ENCODE measurements at regions of chr2 and their contacts with region 1.

Region 1: DNA sequence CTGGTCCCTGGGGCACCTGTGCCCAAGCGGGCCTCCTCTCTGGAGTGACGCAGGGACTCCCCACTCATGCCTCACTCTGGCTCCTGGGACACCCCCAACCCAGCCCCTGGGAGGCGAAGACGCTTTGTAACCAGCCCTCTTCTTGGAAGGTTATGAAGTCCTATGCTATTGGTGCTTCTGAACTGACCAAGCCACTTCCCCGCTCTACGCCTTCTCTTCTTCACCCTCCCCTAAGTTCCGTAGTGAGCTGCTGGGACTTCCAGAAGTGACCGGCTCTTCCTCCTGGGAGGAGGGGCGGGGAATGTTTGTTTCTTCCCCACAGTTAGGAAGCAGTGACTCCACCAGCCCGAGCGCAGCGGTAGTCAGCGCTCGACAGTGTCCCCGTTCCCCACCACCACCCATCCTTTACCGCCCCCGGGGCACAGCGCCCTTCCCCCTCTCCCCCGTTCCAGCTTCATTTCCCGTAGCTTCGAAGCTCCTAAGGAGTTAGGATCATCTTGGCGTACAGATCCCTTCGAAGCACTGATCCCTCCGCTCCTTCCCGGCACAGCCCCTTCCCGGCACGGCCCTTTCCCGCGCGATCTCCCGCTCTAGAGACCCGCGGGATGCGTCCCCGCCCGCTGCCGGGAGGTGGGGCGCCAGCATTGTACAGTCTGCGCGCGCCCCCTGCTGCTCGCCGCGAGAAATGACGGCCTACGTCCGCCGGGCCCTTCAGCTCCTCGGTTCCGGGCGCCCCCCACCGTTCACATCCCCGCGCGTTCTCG is 25.3 kb upstream of the NOTO start:
- DNase-seq: peak; percentile 90 to 96
- H3K4me3 ChIP-seq: peak overlapping the region; percentile 76
- H3K4me3 Mint-ChIP-seq: peak overlapping the region; percentile 94
- H3K27ac Mint-ChIP-seq: peak overlapping the region; percentile 87
- H3K4me1 ChIP-seq: peaks cover 28% of the 10 kb centered on the region
- H3K4me1 Mint-ChIP-seq: peaks cover 10% of the 10 kb centered on the region
- H3K27me3 ChIP-seq: no peaks in the 10 kb centered on the region
- H3K27me3 Mint-ChIP-seq: peaks cover 6% of the 10 kb centered on the region
- CTCF ChIP-seq: peak; percentile 99

Region 2: GRCh38 chr2:72993147-72993932 is 183.7 kb before region 1 on chr2:
- CTCF ChIA-PET with region 1: interaction called, 6 read pairs
- POLR2A ChIA-PET with region 1: no interaction called
- intact Hi-C with region 1: loop called (anchors 1 kb)
- DNase-seq: peak in 1 of 2 experiments; percentile 70
- H3K4me3 ChIP-seq: no peak overlapping the region
- H3K4me3 Mint-ChIP-seq: no peak overlapping the region
- H3K27ac Mint-ChIP-seq: no peak overlapping the region
- H3K4me1 ChIP-seq: no peaks in the 10 kb centered on the region
- H3K4me1 Mint-ChIP-seq: no peaks in the 10 kb centered on the region
- H3K27me3 ChIP-seq: no peaks in the 10 kb centered on the region
- H3K27me3 Mint-ChIP-seq: no peaks in the 10 kb centered on the region
- CTCF ChIP-seq: peak; percentile 78 to 98

Region 3: GRCh38 chr2:73085691-73086360 is 91.2 kb before region 1 on chr2:
- CTCF ChIA-PET with region 1: interaction called, 25 read pairs
- POLR2A ChIA-PET with region 1: no interaction called
- intact Hi-C with region 1: no loop called
- DNase-seq: peak; percentile 87 to 89
- H3K4me3 ChIP-seq: no peak overlapping the region
- H3K4me3 Mint-ChIP-seq: no peak overlapping the region
- H3K27ac Mint-ChIP-seq: no peak overlapping the region
- H3K4me1 ChIP-seq: peaks cover 27% of the 10 kb centered on the region
- H3K4me1 Mint-ChIP-seq: peaks cover 24% of the 10 kb centered on the region
- H3K27me3 ChIP-seq: no peaks in the 10 kb centered on the region
- H3K27me3 Mint-ChIP-seq: no peaks in the 10 kb centered on the region
- CTCF ChIP-seq: peak; percentile 93 to 95

Region 4: GRCh38 chr2:73163483-73164367 is 13.3 kb before region 1 on chr2:
- CTCF ChIA-PET with region 1: interaction called, 12 read pairs
- POLR2A ChIA-PET with region 1: no interaction called
- intact Hi-C with region 1: no loop called
- DNase-seq: peak; percentile 80 to 86
- H3K4me3 ChIP-seq: no peak overlapping the region
- H3K4me3 Mint-ChIP-seq: no peak overlapping the region
- H3K27ac Mint-ChIP-seq: no peak overlapping the region
- H3K4me1 ChIP-seq: no peaks in the 10 kb centered on the region
- H3K4me1 Mint-ChIP-seq: no peaks in the 10 kb centered on the region
- H3K27me3 ChIP-seq: no peaks in the 10 kb centered on the region
- H3K27me3 Mint-ChIP-seq: peaks cover 8% of the 10 kb centered on the region
- CTCF ChIP-seq: peak; percentile 86 to 92

Region 5: DNA sequence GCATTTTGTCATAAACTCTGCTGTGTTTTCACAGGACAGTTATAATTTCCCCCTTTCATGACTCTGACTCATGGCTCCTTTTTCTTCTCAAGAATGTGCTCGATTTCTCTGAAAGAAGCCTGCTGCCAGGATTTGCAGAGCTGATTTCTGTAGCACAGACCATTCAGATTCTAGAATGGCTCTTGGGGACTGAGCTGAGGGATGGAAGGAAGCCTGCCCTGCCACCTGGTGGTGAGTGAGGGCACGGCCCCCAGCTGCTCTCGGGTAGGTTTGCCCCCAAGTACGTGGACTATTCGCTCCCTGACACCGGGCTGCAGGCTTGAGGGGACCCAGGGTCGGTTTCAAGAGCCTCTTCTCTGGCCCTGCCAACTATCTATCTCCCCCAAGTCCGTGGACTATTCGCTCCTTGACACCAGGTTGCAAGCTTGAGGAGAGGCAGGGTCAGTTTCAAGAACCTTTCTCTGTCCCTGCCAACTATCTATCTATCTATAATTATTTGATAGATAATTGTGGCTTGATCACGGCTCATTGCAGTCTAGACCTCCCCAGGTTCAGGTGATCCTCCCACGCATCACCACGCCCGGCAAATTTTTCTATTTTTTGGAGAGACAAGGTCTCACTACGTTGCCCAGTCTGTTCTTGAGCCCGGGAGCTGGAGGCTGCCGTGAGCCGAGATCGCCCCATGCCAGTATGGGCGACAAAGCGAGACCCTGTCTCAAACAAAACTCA is 35.5 kb after region 1 on chr2:
- CTCF ChIA-PET with region 1: interaction called, 105 read pairs
- POLR2A ChIA-PET with region 1: interaction called, 4 read pairs
- intact Hi-C with region 1: loop called (anchors 1 kb)
- DNase-seq: peak; percentile 70 to 87
- H3K4me3 ChIP-seq: no peak overlapping the region
- H3K4me3 Mint-ChIP-seq: peak overlapping the region; percentile 89
- H3K27ac Mint-ChIP-seq: no peak overlapping the region
- H3K4me1 ChIP-seq: peaks cover 20% of the 10 kb centered on the region
- H3K4me1 Mint-ChIP-seq: peaks cover 9% of the 10 kb centered on the region
- H3K27me3 ChIP-seq: no peaks in the 10 kb centered on the region
- H3K27me3 Mint-ChIP-seq: no peaks in the 10 kb centered on the region
- CTCF ChIP-seq: peak; percentile 95

Region 6: DNA sequence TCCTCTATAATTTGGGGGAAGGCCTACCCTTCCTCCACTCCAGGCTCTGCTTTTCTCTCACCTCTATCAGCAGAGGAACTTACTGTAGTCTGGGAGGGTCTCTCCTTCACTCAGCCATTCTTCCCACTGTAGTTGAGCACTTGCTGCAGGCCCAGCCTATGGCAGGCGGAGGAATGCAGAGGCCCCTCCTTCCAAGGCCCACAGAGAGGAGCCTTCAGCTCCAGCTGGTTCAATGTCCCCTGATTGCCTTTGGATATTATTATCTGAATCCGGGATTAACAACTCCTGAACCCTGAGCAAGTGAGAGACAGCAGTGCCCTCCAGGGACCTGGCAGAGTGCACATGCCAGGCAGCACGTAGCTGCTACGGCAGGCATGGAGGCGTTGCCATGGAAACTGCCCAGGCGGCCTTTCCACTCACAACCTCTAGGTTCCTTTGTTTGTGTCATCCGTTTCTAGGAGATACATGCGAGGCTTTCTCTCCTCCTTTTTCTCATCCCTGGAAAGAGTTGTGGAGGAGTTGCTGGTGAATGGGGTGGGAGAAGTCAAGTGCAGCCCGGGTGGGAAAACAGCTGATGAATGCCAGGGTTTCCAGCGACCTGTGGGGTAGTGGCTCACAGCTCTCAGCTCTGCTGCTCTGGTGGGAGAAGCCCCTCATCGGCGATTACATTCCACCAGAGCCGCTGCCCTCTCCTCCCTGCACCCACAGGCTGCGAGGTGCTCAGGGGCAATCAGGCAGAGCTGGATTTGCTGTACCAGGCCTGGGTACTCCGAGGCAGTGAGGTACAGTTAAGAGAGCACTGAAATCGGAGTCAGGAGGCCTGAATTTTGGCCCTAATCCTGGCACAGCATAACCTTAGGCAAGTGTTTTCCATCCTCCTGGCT is 1601.6 kb after region 1 on chr2:
- CTCF ChIA-PET with region 1: no interaction called
- POLR2A ChIA-PET with region 1: no interaction called
- intact Hi-C with region 1: no loop called
- DNase-seq: no peak
- H3K4me3 ChIP-seq: no peak overlapping the region
- H3K4me3 Mint-ChIP-seq: no peak overlapping the region
- H3K27ac Mint-ChIP-seq: no peak overlapping the region
- H3K4me1 ChIP-seq: no peaks in the 10 kb centered on the region
- H3K4me1 Mint-ChIP-seq: peaks cover 9% of the 10 kb centered on the region
- H3K27me3 ChIP-seq: no peaks in the 10 kb centered on the region
- H3K27me3 Mint-ChIP-seq: peaks cover 4% of the 10 kb centered on the region
- CTCF ChIP-seq: no peak